ENCODE measurements at regions of chr1 and their contacts with region 1.

Region 1: GRCh38 chr1:6489799-6490180 is 1.7 kb downstream of the PLEKHG5 start:
- DNase-seq: peak; percentile 80
- H3K4me3 ChIP-seq: peak overlapping the region; percentile 84 to 93 (median 92)
- H3K27ac ChIP-seq: peak overlapping the region; percentile 96
- H3K4me1 ChIP-seq: peaks cover 69% of the 10 kb centered on the region
- H3K27me3 ChIP-seq: no peaks in the 10 kb centered on the region
- CTCF ChIP-seq: peak; percentile 68 to 92

Region 2: DNA sequence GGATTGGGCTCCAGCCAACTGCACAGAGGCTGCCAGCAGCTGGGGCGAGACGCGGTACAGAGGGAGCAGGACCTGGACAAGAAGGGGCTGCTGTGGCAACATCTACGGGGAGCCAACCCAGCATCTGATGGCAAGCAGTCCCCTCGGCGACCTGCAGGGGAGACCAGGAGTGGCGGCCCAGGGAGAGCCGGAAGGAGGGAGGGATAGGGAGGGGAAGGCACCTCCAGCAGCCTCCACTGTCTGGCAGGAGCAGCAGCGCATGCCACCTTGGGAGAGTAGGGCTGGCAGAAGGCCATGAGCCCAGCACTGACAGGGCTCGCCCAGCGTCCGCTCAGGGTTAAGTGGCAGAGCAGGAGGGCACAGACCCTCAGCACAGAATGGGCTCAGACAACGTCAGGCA is 327.0 kb before region 1 on chr1:
- CTCF ChIA-PET with region 1: no interaction called
- dilution Hi-C with region 1: no loop called
- in situ Hi-C with region 1: no loop called
- intact Hi-C with region 1: no loop called
- DNase-seq: no peak
- H3K4me3 ChIP-seq: no peak overlapping the region
- H3K27ac ChIP-seq: no peak overlapping the region
- H3K4me1 ChIP-seq: peaks cover 7% of the 10 kb centered on the region
- H3K27me3 ChIP-seq: no peaks in the 10 kb centered on the region
- CTCF ChIP-seq: peak in 1 of 2 donors; percentile 16

Region 3: GRCh38 chr1:6358757-6359201 is 131.0 kb before region 1 on chr1:
- CTCF ChIA-PET with region 1: no interaction called
- dilution Hi-C with region 1: no loop called
- in situ Hi-C with region 1: no loop called
- intact Hi-C with region 1: no loop called
- DNase-seq: peak; percentile 66
- H3K4me3 ChIP-seq: no peak overlapping the region
- H3K27ac ChIP-seq: peak overlapping the region; percentile 54
- H3K4me1 ChIP-seq: peaks cover 53% of the 10 kb centered on the region
- H3K27me3 ChIP-seq: no peaks in the 10 kb centered on the region
- CTCF ChIP-seq: no peak

Region 4: DNA sequence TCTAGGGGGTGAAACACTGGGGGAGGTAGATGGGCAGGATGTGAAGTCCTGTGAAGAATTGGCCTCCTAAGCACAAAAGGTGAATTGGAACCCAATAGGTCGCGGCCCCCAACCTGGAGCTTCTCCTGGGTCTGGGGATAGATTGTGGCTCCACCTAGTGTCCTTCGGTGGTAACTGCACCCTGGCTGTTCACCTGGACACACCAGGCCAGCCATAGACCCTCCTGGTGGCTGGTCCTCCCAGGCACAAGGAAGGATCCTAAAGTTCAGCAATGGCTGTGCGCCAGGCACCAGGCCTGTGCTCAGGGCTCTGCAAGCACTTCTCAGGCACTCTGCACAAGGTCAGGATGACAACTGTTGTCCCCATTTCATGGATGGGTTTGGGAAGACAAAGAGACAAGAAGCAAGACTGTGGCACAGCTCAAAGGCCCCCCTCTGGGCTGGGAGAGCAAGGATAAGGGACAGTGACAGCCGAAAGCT is 51.7 kb before region 1 on chr1:
- CTCF ChIA-PET with region 1: no interaction called
- dilution Hi-C with region 1: loop called (anchors 5 kb)
- in situ Hi-C with region 1: no loop called
- intact Hi-C with region 1: no loop called
- DNase-seq: peak; percentile 58
- H3K4me3 ChIP-seq: no peak overlapping the region
- H3K27ac ChIP-seq: no peak overlapping the region
- H3K4me1 ChIP-seq: peaks cover 4% of the 10 kb centered on the region
- H3K27me3 ChIP-seq: no peaks in the 10 kb centered on the region
- CTCF ChIP-seq: peak; percentile 90 to 96

Region 5: DNA sequence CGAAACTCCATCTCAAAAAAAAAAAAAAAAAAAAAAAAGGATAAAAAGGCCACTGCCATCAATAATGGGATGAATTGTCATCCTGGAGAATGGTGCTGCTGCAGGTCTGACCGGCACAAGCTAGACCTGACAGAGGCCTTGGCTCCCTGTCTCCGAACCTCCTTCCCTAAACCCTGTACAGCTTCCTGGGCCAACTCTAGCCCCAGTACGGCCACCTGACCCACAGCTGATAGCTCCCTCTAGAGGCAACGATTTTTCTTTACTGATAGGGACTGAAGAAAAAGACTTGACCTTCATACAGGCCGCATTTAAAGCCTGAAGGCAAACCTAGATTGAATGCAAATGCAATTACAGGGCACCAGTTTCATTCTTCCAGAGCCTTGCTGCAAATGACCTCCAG is 33.8 kb after region 1 on chr1:
- CTCF ChIA-PET with region 1: interaction called, 3 read pairs
- dilution Hi-C with region 1: no loop called
- in situ Hi-C with region 1: no loop called
- intact Hi-C with region 1: loop called (anchors 1 kb)
- DNase-seq: peak; percentile 36
- H3K4me3 ChIP-seq: no peak overlapping the region
- H3K27ac ChIP-seq: no peak overlapping the region
- H3K4me1 ChIP-seq: peaks cover 30% of the 10 kb centered on the region
- H3K27me3 ChIP-seq: no peaks in the 10 kb centered on the region
- CTCF ChIP-seq: peak; percentile 59 to 72

Region 6: GRCh38 chr1:6554031-6554906 is 64.5 kb after region 1 on chr1 and contains the start of gene NOL9:
- CTCF ChIA-PET with region 1: no interaction called
- dilution Hi-C with region 1: no loop called
- in situ Hi-C with region 1: no loop called
- intact Hi-C with region 1: loop called (anchors 2 kb)
- DNase-seq: peak; percentile 83
- H3K4me3 ChIP-seq: peak within 1 kb of the TSS; percentile 96 to 100 (median 97)
- H3K27ac ChIP-seq: peak within 1 kb of the TSS; percentile 75
- H3K4me1 ChIP-seq: peaks cover 14% of the 10 kb centered on the region
- H3K27me3 ChIP-seq: no peaks in the 10 kb centered on the region
- CTCF ChIP-seq: peak; percentile 68 to 92
- total RNA-seq, gene NOL9: 25.5 to 36.4 TPM

Region 7: GRCh38 chr1:6601049-6601922 is 111.5 kb after region 1 on chr1:
- CTCF ChIA-PET with region 1: no interaction called
- dilution Hi-C with region 1: no loop called
- in situ Hi-C with region 1: no loop called
- intact Hi-C with region 1: loop called (anchors 2 kb)
- DNase-seq: peak; percentile 99
- H3K4me3 ChIP-seq: peak overlapping the region; percentile 58 to 98 (median 95)
- H3K27ac ChIP-seq: peak overlapping the region; percentile 97
- H3K4me1 ChIP-seq: peaks cover 42% of the 10 kb centered on the region
- H3K27me3 ChIP-seq: no peaks in the 10 kb centered on the region
- CTCF ChIP-seq: peak in 1 of 2 donors; percentile 6

Region 8: GRCh38 chr1:6646499-6647148 is 156.8 kb after region 1 on chr1:
- CTCF ChIA-PET with region 1: no interaction called
- dilution Hi-C with region 1: no loop called
- in situ Hi-C with region 1: no loop called
- intact Hi-C with region 1: loop called (anchors 2 kb)
- DNase-seq: peak; percentile 24
- H3K4me3 ChIP-seq: no peak overlapping the region
- H3K27ac ChIP-seq: no peak overlapping the region
- H3K4me1 ChIP-seq: no peaks in the 10 kb centered on the region
- H3K27me3 ChIP-seq: no peaks in the 10 kb centered on the region
- CTCF ChIP-seq: peak; percentile 50 to 65

Region 9: GRCh38 chr1:7218210-7218832 is 728.5 kb after region 1 on chr1:
- CTCF ChIA-PET with region 1: no interaction called
- dilution Hi-C with region 1: no loop called
- in situ Hi-C with region 1: no loop called
- intact Hi-C with region 1: loop called (anchors 10 kb)
- DNase-seq: peak; percentile 14
- H3K4me3 ChIP-seq: no peak overlapping the region
- H3K27ac ChIP-seq: no peak overlapping the region
- H3K4me1 ChIP-seq: no peaks in the 10 kb centered on the region
- H3K27me3 ChIP-seq: no peaks in the 10 kb centered on the region
- CTCF ChIP-seq: peak; percentile 78 to 83